ENCODE measurements at regions of chr7 and their contacts with region 1.

Region 1: DNA sequence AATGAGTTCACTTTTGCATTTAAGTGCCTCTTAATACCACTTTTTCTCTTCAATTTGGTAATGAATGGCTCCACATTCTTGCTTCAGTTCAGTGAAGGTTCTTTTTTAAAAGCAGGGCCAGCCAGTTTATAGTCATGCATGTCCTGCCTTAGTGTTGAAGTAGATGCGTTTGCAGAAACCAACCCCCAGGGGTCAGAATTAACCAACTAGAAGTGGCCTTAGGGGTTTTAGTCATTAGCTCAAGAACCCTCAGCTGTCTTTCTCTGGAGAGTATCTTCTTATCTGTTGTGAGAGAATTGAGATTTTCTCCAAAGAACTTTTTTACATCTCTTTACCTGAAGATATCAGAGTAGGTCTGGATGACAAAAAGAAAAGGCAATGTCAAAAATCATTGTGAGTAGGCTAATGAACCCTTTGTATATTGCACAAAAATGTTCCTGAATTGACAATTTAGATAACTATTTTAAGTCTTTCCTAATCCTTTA is 82.2 kb downstream of the PIK3CG start:
- DNase-seq: peak; percentile 38
- H3K4me3 ChIP-seq: no peak overlapping the region
- H3K27me3 ChIP-seq: peaks cover 2% of the 10 kb centered on the region; the same call in 1 of the 2 replicates
- CTCF ChIP-seq: peak; percentile 77

Region 2: GRCh38 chr7:106757846-106758245 is 189.4 kb before region 1 on chr7:
- CTCF ChIA-PET with region 1: no interaction called
- POLR2A ChIA-PET with region 1: no interaction called
- DNase-seq: no peak
- H3K4me3 ChIP-seq: no peak overlapping the region
- H3K27me3 ChIP-seq: no peaks in the 10 kb centered on the region
- CTCF ChIP-seq: no peak

Region 3: GRCh38 chr7:106793015-106793975 is 154.0 kb before region 1 on chr7:
- CTCF ChIA-PET with region 1: interaction called, 10 read pairs
- POLR2A ChIA-PET with region 1: no interaction called
- DNase-seq: no peak
- H3K4me3 ChIP-seq: no peak overlapping the region
- H3K27me3 ChIP-seq: no peaks in the 10 kb centered on the region
- CTCF ChIP-seq: peak; percentile 50

Region 4: DNA sequence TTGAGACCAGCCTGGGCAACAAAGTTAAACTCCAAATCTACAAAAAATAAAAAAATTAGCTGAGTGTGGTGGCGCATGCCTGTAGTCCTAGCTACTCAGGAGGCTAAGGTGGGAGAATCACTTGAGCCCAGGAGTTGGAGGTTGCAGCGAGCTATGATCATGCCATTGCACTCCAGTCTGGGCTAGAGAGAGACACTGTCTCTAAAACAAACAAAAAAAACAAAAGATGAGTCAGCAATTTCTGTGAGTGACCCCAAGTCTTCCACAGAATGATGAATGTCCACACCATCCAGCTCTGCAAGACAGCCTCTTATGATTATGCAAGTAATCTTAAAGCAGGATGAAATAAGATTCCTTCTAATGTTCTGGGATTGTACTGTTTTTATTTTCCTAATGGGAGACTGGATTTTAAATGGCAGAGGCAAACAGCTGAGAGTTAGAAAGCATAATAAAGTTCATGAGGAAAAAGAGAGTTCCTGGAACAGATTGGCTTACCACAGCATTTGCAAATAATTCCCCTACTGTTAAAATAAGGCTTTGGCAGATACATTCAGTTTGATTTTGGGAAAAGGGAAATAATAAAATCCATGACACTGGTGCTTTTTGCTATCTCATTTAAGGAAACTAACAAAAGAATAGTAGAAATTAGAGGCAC is 78.3 kb after region 1 on chr7:
- CTCF ChIA-PET with region 1: no interaction called
- POLR2A ChIA-PET with region 1: no interaction called
- DNase-seq: no peak
- H3K4me3 ChIP-seq: no peak overlapping the region
- H3K27me3 ChIP-seq: no peaks in the 10 kb centered on the region
- CTCF ChIP-seq: no peak

Measured in BJ (cell line).